Dendritic cell treated with granulocyte-macrophage colony-stimulating factor and Interleukin-4, amounts not matched to agents 40 ng/mL and 50 ng/mL, for 4 days (primary cell): ENCODE measurements at regions of chr1 and their contacts with region 1.

Region 1: GRCh38 chr1:234610348-234611152 is 572 bp upstream of the IRF2BP2 start:
- H3K4me3 Mint-ChIP-seq: peak overlapping the region; percentile 76
- H3K27ac Mint-ChIP-seq: peak overlapping the region; percentile 100
- H3K4me1 Mint-ChIP-seq: peaks cover 38% of the 10 kb centered on the region
- H3K27me3 Mint-ChIP-seq: no peaks in the 10 kb centered on the region

Region 2: DNA sequence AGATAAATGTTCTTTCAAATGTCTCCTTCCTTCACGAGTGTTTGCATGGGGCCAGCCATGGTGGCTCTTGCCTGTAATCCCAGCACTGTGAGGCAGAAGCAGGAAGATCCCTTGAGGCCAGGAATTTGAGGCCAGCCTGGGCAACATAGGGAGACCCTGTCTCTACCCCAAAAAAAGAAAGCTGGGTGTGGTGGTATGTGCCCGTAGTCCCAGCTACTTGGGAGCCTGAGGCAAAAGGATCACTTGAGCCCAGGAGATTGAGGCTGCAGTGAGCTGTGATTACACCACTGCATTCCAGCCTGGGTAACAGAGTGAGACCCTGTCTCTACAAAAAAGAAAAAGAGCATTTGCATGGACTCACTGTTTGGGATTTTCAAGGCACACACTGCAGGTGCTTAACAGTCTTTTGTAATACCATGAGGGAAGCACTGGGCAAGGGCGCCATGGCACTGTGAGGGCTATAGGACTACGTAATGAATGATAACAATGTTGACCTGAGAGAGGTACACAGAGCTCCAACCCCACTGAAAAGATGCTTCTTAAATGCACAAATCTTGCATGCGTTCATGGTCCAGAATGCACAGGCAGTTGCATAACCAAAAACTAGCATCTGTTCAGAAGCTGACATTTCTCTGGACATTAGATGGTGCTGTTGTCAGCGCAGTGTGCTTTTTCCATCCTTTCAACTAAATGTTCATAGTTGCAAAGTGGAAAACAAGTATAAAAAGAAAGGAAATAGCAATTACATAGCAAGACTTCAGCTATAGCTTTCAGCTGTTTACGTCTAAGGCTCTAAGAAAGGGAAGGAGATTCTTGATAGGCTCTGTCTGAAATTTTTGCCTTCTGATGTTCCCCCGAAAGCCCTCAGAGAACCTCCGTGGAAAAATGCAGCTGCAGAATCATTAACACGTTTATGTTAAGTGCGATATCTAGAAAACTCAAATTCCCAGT is 123.8 kb before region 1 on chr1:
- intact Hi-C with region 1: no loop called
- H3K4me3 Mint-ChIP-seq: no peak overlapping the region
- H3K27ac Mint-ChIP-seq: no peak overlapping the region
- H3K4me1 Mint-ChIP-seq: peaks cover 44% of the 10 kb centered on the region
- H3K27me3 Mint-ChIP-seq: peaks cover 16% of the 10 kb centered on the region

Region 3: GRCh38 chr1:234656856-234657654 is 46.5 kb after region 1 on chr1:
- intact Hi-C with region 1: loop called (anchors 2 kb)
- H3K4me3 Mint-ChIP-seq: peak overlapping the region; percentile 67
- H3K27ac Mint-ChIP-seq: peak overlapping the region; percentile 91
- H3K4me1 Mint-ChIP-seq: peaks cover 58% of the 10 kb centered on the region
- H3K27me3 Mint-ChIP-seq: no peaks in the 10 kb centered on the region

Region 4: GRCh38 chr1:234722904-234723720 is 112.6 kb after region 1 on chr1:
- intact Hi-C with region 1: loop called (anchors 2 kb)
- H3K4me3 Mint-ChIP-seq: peak overlapping the region; percentile 57
- H3K27ac Mint-ChIP-seq: peak overlapping the region; percentile 99
- H3K4me1 Mint-ChIP-seq: peaks cover 97% of the 10 kb centered on the region
- H3K27me3 Mint-ChIP-seq: no peaks in the 10 kb centered on the region

Region 5: GRCh38 chr1:234772345-234773147 is 162.0 kb after region 1 on chr1:
- intact Hi-C with region 1: loop called (anchors 2 kb)
- H3K4me3 Mint-ChIP-seq: peak overlapping the region; percentile 2
- H3K27ac Mint-ChIP-seq: no peak overlapping the region
- H3K4me1 Mint-ChIP-seq: peaks cover 56% of the 10 kb centered on the region
- H3K27me3 Mint-ChIP-seq: no peaks in the 10 kb centered on the region

Region 6: DNA sequence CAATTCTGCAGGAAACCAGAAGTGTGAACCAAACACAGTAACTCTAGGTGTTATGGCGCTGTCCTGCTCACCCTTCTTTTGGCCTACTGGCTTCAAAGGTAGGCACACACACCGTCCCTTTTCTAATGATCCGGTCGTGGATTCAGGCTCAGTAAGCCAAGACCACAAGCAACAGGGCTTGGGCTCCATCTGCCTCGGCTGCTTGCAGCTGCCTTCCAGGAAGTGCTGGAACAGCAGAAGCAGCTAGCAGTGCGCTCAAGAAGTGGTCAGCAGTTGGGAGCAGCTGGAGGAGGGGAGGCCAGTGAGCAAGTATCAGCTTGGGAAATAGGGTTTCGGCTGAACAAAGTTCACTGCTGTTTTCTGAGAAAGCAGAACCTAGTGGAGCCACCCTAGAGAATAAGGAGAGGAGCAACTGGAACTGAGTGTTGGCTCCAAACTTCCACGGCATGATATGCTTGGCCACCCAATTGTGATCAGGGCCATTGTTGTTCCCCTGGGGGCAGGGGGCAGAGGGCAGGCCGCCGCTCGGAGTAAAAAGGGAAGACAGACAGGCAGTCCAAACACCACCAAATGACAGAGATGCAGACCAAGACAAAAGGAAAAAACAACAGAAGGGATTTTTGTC is 344.7 kb after region 1 on chr1:
- intact Hi-C with region 1: loop called (anchors 5 kb)
- H3K4me3 Mint-ChIP-seq: peak overlapping the region; percentile 61
- H3K27ac Mint-ChIP-seq: peak overlapping the region; percentile 98
- H3K4me1 Mint-ChIP-seq: peaks cover 77% of the 10 kb centered on the region
- H3K27me3 Mint-ChIP-seq: no peaks in the 10 kb centered on the region